ENCODE measurements at regions of chr7 and their contacts with region 1.

Region 1: GRCh38 chr7:41881331-41882130 is 178.6 kb upstream of the INHBA start:
- DNase-seq: peak; percentile 76
- H3K4me3 Mint-ChIP-seq: peak overlapping the region; percentile 71
- H3K27ac Mint-ChIP-seq: peak overlapping the region; percentile 96
- H3K4me1 Mint-ChIP-seq: peaks cover 60% of the 10 kb centered on the region
- H3K27me3 Mint-ChIP-seq: no peaks in the 10 kb centered on the region

Region 2: DNA sequence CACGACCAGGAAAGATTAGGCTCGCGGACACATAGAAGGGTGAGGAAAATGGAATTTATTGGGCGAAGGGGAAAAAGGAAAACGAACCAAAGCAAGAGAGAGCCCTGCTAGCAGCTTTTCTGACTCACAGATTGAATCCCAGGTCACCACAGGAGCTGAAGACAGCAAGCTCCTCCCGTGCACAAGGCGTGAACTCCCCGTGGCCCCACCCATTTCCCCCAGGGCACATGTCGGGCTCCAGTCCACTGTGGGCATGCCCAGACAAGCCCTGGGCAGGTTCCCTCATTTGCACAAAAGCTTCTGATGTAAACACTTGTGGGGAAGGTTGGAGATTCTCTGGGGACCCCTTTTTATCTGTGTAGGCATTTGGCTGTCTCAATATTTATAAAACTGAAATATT is 1164.3 kb before region 1 on chr7:
- intact Hi-C with region 1: loop called (anchors 10 kb)
- DNase-seq: peak; percentile 22
- H3K4me3 Mint-ChIP-seq: no peak overlapping the region
- H3K27ac Mint-ChIP-seq: no peak overlapping the region
- H3K4me1 Mint-ChIP-seq: peaks cover 7% of the 10 kb centered on the region
- H3K27me3 Mint-ChIP-seq: no peaks in the 10 kb centered on the region

Region 3: GRCh38 chr7:41705109-41705901 is 176.2 kb before region 1 on chr7:
- intact Hi-C with region 1: loop called (anchors 10 kb)
- DNase-seq: peak; percentile 52
- H3K4me3 Mint-ChIP-seq: peak overlapping the region; percentile 75
- H3K27ac Mint-ChIP-seq: no peak overlapping the region
- H3K4me1 Mint-ChIP-seq: peaks cover 8% of the 10 kb centered on the region
- H3K27me3 Mint-ChIP-seq: peaks cover 41% of the 10 kb centered on the region

Region 4: GRCh38 chr7:41817386-41817785 is 64.1 kb before region 1 on chr7:
- intact Hi-C with region 1: loop called (anchors 1 kb)
- DNase-seq: peak; percentile 25
- H3K4me3 Mint-ChIP-seq: no peak overlapping the region
- H3K27ac Mint-ChIP-seq: peak overlapping the region; percentile 56
- H3K4me1 Mint-ChIP-seq: peaks cover 49% of the 10 kb centered on the region
- H3K27me3 Mint-ChIP-seq: peaks cover 1% of the 10 kb centered on the region

Region 5: DNA sequence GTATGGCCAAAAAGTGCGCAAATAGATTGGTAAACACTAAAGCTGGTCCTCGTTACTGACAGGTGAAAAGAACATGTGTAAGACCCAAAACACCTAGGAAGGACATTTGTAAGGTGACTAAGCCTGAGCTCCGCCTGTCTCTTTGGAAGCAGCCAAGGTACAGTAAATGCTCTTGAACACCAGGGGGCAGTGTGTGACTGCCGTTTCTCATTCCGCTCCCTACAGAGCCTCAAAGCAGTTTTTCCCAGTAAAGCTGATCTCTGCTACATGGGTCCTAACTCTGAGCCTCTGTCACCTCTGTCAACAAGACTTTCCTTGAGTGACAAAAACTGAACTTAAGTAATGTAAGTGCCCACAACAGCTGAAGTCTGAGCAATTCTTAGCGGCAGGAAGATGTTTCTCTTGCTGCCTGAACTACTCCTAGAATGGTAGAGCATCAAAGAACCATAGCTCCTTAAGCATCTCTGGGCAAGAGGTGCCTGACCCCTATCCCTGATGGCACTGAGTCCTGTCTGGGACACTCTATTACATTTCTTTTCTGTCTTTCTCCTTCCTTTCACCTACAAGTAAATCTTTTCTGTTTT is 59.3 kb after region 1 on chr7:
- intact Hi-C with region 1: loop called (anchors 5 kb)
- DNase-seq: peak; percentile 35
- H3K4me3 Mint-ChIP-seq: no peak overlapping the region
- H3K27ac Mint-ChIP-seq: no peak overlapping the region
- H3K4me1 Mint-ChIP-seq: peaks cover 26% of the 10 kb centered on the region
- H3K27me3 Mint-ChIP-seq: peaks cover 22% of the 10 kb centered on the region

Region 6: DNA sequence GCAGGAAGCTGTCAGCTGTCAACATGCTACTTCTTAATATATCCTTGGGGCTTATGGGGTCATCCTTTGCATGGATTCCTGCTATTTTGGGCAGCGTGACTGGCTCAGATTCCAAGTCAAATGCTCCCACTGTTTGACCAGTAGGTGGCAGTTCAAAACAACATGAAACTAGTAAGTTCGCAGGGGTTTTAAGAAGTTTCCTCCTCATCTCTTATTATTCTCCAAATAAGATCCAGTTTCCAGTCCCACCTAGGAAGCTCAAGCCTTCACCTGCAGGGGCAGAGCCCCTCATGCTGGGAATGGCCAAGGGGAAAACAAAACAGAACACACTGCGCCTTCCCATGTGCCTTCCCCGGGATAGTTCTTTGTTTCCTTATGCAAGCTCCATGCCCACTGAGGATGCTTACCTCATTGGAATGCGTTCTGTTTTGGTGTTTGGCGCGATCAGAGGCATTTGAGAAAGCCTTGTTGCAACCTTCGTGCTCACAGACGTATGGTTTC is 95.7 kb after region 1 on chr7:
- intact Hi-C with region 1: no loop called
- DNase-seq: no peak
- H3K4me3 Mint-ChIP-seq: no peak overlapping the region
- H3K27ac Mint-ChIP-seq: no peak overlapping the region
- H3K4me1 Mint-ChIP-seq: no peaks in the 10 kb centered on the region
- H3K27me3 Mint-ChIP-seq: peaks cover 9% of the 10 kb centered on the region

Region 7: DNA sequence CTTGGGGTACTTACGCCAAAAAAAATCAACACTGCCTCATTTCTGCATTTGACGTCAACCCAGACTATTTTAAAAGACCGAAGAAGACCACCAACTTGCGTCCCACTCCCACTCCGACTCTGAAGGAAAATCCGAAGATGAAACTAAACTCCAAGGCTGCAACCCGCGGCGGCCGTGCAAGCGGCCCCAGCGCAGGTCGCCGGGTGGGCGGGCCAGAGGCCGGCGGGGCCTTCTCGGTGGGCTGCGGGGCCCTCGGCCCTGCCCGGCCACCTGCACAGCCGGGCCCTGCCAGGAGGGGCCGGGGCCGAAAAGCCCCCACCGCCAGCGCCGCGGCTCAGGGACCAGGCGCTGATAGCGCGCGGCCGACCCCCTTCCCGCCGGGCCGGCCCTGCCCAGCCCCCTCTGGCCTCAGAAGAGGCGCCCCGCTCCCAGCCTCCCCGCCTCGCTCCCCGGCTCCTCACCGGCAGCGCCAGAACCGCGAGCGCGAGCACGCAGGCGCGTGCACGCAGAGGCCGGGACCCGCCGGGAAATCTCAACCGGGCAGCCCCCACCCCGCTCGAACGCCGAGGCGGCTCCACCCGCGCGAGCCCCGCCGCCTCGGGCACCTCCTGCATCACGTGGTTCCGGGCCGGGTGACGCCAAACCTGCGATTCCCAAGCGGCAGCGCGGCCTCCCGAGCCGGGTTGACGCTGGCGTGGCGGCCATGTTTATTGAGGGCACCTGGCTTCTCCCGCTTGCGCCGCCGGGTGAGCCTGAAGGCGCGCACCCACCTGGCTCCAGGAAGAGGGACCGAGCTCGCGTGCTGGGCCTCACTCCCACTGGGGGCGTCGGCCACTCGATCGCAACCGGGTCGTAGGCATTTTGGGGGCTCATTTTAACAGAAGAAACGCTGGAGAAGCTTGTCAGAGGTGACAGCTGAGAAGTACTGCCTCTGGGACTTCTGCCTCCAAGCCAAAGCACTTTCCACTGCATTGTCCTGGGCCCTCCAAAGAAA is 1030.2 kb after region 1 on chr7 and contains the start of gene C7orf25:
- intact Hi-C with region 1: loop called (anchors 5 kb)
- DNase-seq: peak; percentile 93
- H3K4me3 Mint-ChIP-seq: peak within 1 kb of the TSS; percentile 90
- H3K27ac Mint-ChIP-seq: peak within 1 kb of the TSS; percentile 80
- H3K4me1 Mint-ChIP-seq: peaks cover 86% of the 10 kb centered on the region
- H3K27me3 Mint-ChIP-seq: no peaks in the 10 kb centered on the region
- total RNA-seq, gene C7orf25: 5.7 and 6.1 TPM in 2 replicates

Region 8: DNA sequence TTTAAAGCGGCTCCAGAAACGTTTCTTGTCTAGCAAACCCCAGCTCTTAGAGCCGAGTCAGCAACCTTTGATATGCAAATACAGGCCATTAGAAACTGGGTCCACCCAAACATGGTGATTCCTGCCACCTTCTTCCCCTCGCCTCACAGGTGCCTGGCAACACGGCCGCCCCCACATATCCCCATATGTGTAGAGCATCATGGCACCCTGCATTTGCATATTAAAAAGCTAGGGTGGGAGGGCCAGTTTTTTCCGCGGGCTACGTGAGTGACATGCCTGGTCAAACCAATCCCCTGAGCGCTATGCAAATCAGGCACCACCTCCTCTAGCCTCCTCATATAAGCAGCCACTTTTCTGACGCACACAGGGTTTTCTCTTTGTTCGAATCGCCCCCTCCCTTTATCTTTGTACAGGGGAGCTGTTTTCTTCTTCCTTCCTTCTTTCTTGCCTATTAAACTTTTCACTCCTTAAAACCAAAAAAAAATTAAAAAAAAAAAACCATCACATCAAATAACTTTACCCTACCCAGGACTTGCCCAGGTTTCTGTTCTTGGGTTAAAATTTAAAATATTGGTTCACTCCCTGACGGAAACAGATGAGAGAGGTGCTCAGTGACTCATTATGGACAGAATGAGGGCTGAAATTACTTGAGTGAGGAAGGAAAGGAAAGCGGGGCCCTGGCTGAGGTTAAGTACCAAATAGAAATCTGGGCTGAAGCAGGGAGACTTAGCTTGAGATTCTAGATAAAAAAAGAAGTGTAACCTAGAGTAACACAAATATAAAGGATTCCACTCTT is 1788.0 kb after region 1 on chr7:
- intact Hi-C with region 1: loop called (anchors 10 kb)
- DNase-seq: peak; percentile 29
- H3K4me3 Mint-ChIP-seq: peak overlapping the region; percentile 65
- H3K27ac Mint-ChIP-seq: peak overlapping the region; percentile 91
- H3K4me1 Mint-ChIP-seq: peaks cover 51% of the 10 kb centered on the region
- H3K27me3 Mint-ChIP-seq: no peaks in the 10 kb centered on the region

Measured in activated T-helper 1 cell treated with anti-CD3 and anti-CD28 coated beads, Interleukin-12 subunit alpha, Interleukin-12 subunit beta, Interleukin-2, Interleukin-4 antibody, amounts not matched to agents 30 ng/mL and 10 ng/mL and 1 ng/mL, durations not matched to agents 14 hours and 24 hours and 36 hours (primary cell).